ENCODE measurements at regions of chr1 and their contacts with region 1.

Region 1: GRCh38 chr1:211654838-211655787 is 20.3 kb downstream of the NEK2 start:
- DNase-seq: peak; percentile 95
- H3K4me3 Mint-ChIP-seq: no peak overlapping the region
- H3K27ac Mint-ChIP-seq: no peak overlapping the region
- H3K4me1 Mint-ChIP-seq: peaks cover 26% of the 10 kb centered on the region
- H3K27me3 Mint-ChIP-seq: no peaks in the 10 kb centered on the region
- CTCF ChIP-seq: peak; percentile 100

Region 2: DNA sequence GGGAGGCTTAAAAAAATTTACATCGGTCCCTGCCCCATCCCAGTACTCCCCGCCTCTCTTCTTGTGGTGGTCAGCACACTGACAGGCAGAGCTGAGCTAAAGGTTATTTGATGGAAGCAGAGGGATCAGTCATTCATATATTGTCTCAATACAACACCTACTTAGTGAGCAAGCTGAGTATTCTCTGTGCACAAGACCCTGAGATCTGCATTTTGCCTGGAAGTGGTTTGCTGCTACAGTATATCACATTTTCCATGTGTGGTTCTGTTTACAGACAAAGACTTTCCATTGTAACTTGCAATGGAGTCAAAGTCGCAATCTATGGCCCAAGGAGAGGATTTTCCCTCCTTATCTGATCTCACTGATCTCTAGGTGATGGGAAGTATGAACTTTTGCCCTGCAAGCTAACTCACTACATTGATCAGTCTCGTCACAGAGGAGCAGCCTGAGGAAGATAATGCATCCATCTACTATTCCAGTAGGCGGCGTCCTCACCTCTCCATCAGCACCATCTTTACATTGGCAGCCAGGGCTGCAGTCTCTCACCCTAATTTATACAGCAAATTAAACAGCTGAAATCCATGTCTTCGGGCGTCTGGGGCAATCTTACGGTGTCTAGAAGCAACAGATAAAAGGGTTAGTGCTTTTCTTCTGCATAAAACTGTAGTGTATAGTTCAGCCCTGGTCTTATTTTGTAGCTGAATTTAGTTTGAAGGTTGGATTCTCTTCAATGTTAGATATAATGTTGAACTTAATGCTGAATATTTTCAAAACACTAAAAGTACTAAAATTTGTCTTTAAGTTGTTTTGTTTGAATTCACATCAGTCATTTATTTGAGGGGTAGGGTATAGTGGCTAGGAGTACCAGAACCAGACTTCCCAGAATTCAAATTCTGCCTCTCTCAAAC is 331.7 kb before region 1 on chr1:
- CTCF ChIA-PET with region 1: interaction called, 61 read pairs
- POLR2A ChIA-PET with region 1: interaction called, 7 read pairs
- intact Hi-C with region 1: loop called (anchors 1 kb)
- DNase-seq: peak; percentile 88
- H3K4me3 Mint-ChIP-seq: no peak overlapping the region
- H3K27ac Mint-ChIP-seq: no peak overlapping the region
- H3K4me1 Mint-ChIP-seq: peaks cover 15% of the 10 kb centered on the region
- H3K27me3 Mint-ChIP-seq: no peaks in the 10 kb centered on the region
- CTCF ChIP-seq: peak; percentile 98

Region 3: DNA sequence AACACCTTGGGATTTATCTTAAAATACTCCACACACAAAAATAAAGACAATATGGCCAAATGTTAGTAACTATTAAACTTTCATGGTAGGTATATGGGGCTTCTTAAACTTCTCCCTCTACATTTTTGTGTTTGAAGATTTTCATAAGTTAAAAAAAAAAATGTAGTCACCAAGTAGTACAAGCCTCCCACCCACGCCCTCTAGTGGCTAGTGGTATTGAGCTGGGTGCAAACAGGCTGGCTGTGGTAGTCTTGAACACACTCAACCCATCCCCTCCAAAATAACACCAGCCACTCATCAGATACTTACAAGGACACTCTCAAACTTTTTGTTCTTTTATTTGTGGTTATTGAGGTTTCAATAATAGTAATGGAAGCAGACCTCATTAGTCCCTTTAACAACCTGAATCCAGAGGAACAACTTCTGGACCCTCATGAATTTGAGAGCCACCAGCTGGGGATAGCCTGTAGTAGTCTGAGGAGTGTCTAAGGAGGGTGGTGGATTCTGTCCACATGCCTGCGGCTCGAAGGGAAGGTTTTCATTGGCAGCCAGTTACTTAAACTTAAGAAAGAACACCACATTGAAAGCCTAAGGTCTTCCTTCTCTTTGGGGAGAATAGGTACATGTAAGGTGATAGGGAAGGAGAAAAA is 178.8 kb before region 1 on chr1:
- CTCF ChIA-PET with region 1: interaction called, 119 read pairs
- POLR2A ChIA-PET with region 1: no interaction called
- intact Hi-C with region 1: loop called (anchors 1 kb)
- DNase-seq: peak; percentile 93
- H3K4me3 Mint-ChIP-seq: no peak overlapping the region
- H3K27ac Mint-ChIP-seq: no peak overlapping the region
- H3K4me1 Mint-ChIP-seq: peaks cover 8% of the 10 kb centered on the region
- H3K27me3 Mint-ChIP-seq: no peaks in the 10 kb centered on the region
- CTCF ChIP-seq: peak; percentile 98

Region 4: DNA sequence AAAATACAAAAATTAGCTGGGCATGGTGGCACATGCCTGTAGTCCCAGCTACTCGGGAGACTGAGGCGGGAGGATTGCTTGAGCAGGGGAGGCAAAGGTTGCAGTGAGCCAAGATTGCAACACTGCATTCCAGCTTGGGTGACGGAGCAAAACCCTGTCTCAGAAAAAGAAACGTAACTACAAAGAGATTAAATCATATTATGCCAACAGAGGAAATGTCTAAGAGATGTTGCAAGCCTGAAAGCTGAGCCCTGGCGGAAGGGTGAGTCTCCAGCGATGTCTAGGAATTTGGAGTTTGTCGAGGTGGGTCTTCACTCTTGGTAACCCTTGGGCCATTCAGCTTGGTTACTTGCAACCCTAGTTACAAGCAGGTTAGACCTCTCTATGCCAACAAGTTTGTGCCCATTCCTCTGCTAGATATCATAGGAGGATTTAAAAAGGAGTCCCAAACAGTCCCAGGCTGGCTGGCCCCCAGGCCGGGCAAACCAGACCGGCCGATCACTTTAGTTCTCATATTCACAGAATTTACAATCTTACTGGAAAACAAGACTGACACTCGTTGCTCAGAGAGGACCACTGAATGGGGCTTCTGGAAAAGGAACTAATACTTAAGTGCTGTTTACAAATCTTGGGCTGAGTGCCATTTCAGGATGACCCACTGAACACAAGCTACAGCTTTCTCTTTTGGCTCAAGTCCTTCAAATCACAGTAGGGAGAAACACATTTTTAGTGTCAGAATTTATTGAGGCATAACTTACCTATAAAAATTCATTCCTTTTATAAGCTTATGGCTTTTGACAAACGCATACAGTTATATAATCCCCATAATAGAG is 103.3 kb before region 1 on chr1:
- CTCF ChIA-PET with region 1: interaction called, 11 read pairs
- POLR2A ChIA-PET with region 1: interaction called, 5 read pairs
- intact Hi-C with region 1: no loop called
- DNase-seq: peak; percentile 97
- H3K4me3 Mint-ChIP-seq: peak overlapping the region; percentile 36
- H3K27ac Mint-ChIP-seq: peak overlapping the region; percentile 65
- H3K4me1 Mint-ChIP-seq: peaks cover 21% of the 10 kb centered on the region
- H3K27me3 Mint-ChIP-seq: no peaks in the 10 kb centered on the region
- CTCF ChIP-seq: no peak

Region 5: DNA sequence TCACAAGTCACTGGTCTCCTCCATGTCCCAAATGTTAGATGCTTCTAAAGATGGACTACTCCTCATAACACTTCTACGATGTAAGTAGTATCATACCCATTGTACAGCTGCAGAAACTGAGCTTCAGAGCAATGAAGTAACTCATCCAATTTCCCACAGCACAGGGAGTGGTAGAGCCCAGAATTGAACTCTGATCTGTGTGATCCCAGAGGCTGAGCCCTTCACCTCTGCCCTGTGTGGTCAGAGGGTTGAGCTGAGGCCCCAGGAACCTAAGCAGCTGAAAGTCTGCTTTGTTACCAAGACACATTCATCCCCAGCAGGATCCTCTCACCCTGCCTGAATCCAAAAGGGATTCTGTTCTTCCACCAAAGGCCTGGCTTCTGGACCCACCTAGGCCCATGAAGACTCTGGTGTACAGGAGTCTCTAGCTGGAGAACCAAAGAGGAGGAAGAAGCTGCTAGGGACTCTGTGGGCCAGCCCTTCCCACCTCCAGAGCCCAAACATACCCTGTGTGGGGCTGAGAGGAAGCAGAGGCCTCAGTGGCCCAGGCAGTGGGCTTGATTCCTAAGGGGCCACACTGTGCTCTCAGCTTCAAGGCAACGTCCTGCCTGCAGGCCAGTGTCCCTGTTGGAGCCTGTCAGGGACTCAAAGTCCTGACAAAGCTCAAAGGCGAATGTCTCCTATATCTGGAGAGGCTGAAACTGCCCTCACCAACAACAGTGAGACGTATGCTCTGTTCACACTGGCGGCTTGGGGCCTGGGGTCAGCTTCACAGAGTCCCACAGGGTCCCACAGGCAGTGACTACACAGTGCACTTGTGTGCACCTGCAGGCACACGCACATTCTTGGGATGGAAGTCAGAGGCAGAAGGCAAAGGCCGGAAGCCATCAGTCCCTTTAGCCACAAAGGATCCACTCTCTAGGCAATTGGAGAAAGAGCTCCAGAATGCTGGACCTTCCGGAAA is 35.8 kb before region 1 on chr1:
- CTCF ChIA-PET with region 1: interaction called, 36 read pairs
- POLR2A ChIA-PET with region 1: interaction called, 3 read pairs
- intact Hi-C with region 1: no loop called
- DNase-seq: no peak
- H3K4me3 Mint-ChIP-seq: no peak overlapping the region
- H3K27ac Mint-ChIP-seq: no peak overlapping the region
- H3K4me1 Mint-ChIP-seq: peaks cover 5% of the 10 kb centered on the region
- H3K27me3 Mint-ChIP-seq: no peaks in the 10 kb centered on the region
- CTCF ChIP-seq: no peak